ENCODE measurements at regions of chr15 and their contacts with region 1.

Region 1: DNA sequence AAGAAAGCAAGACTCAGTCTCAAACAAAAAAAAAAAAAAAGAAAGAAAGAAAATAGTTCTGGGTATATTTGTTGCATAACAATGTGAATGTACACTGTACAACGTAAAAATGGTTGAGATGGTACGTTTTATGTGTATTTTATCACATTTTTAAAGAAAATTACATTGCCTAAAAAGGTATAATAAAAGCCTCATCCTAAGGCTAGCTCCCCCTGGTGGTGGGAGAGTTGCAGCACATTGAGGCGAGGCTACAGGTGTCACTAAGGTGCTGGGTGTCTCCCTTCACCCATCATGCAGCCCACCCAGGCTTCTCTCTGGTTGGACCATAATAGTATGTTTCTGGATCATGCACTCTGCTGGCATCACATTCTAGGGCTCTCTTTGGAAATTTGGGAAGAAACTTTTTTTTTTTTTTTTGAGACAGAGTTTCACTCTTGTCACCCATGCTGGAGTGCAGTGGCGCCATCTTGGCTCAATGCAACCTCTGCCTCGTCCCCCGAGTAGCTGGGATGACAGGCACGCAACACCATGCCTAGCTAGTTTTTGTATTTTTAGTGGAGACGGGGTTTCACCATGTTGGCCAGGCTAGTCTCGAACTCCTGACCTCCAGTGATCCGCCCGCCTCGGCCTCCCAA is 12.4 kb upstream of the RAB11A start:
- DNase-seq: peak; percentile 82
- ATAC-seq: no peak

Region 2: GRCh38 chr15:65638681-65639089 is 218.3 kb before region 1 on chr15:
- intact Hi-C with region 1: loop called (anchors 5 kb)
- DNase-seq: no peak
- ATAC-seq: peak; percentile 77